H1 (cell line): ENCODE measurements at regions of chr11 and their contacts with region 1.

Region 1: DNA sequence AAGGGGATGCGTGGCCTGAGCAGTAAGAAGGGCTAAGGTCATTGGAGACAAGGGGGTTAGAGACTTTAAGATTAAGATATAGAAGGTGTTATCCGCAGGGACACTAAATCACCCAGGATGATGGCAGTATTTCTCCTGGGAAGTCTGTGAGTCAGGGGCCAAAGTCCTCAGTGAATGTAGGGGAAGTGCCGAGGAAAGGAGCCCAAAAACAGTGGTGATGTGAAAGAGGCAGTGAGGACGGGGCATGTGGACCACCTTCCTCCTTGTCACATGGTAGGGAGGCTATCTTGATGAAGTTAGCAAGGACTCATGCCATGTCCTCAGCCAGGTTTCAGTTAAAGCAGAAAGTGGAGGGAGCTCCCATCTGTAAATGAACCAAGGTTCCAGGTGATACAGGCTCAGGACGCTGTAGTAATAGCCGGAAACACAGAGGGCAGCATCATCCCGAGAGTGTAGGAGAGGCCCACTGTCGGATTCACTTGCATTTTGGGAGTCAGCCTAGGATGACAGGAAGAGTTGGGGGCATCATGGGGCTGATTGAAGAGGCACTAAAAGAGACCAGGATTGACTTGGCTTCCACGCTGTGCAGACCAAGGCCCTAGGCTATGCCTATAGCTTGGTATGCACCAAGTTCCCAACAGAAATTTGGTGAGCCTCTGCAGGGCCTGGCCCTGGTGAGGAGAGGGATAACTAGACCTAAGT is 33.5 kb downstream of the WEE1 start:
- DNase-seq: peak in 1 of 2 experiments; percentile 70
- H3K4me3 ChIP-seq: no peak overlapping the region
- H3K27ac ChIP-seq: no peak overlapping the region
- H3K4me1 ChIP-seq: peaks cover 0 to 3% (median 3%) of the 10 kb centered on the region in 4 experiments
- H3K27me3 ChIP-seq: no peaks in the 10 kb centered on the region
- CTCF ChIP-seq: peak; percentile 54 to 82 (median 71)
- EP300 ChIP-seq: no peak
- POLR2A ChIP-seq: no peak
- RAD21 ChIP-seq: peak; percentile 78 to 86

Region 2: GRCh38 chr11:9347100-9347499 is 259.9 kb before region 1 on chr11:
- CTCF ChIA-PET with region 1: no interaction called
- POLR2A ChIA-PET with region 1: no interaction called
- DNase-seq: no peak
- H3K4me3 ChIP-seq: no peak overlapping the region
- H3K27ac ChIP-seq: no peak overlapping the region
- H3K4me1 ChIP-seq: peaks cover 0 to 10% (median 4%) of the 10 kb centered on the region in 4 experiments; a peak in 2 of 7 replicates
- H3K27me3 ChIP-seq: no peaks in the 10 kb centered on the region
- CTCF ChIP-seq: no peak
- EP300 ChIP-seq: no peak
- POLR2A ChIP-seq: no peak
- RAD21 ChIP-seq: no peak

Region 3: GRCh38 chr11:9386901-9387300 is 220.1 kb before region 1 on chr11:
- CTCF ChIA-PET with region 1: no interaction called
- POLR2A ChIA-PET with region 1: no interaction called
- DNase-seq: no peak
- H3K4me3 ChIP-seq: peak overlapping the region in 1 of 4 experiments; percentile 82; a peak in 1 of 8 replicates
- H3K27ac ChIP-seq: no peak overlapping the region
- H3K4me1 ChIP-seq: no peaks in the 10 kb centered on the region; a peak in 1 of 7 replicates
- H3K27me3 ChIP-seq: no peaks in the 10 kb centered on the region
- CTCF ChIP-seq: no peak
- EP300 ChIP-seq: no peak
- POLR2A ChIP-seq: no peak
- RAD21 ChIP-seq: no peak

Region 4: DNA sequence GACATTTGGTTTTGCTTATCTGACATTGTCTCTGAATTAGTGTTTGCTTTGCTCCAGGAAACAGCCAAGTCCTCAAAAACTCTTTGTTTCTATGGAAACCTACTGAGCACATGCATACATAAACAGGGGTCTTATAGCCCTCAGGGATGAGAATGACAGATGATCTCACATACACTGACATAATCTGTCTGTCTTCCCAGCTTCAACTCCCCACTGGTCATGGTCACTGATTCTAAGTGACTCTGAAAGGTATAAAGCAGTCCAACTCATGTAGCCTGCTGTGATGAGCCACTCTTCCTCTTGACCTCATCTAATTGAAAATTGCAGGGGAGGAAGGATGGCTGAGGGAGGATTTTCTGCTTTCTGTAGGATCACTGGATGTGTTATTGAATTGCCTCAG is 133.6 kb before region 1 on chr11:
- CTCF ChIA-PET with region 1: no interaction called
- POLR2A ChIA-PET with region 1: no interaction called
- DNase-seq: no peak
- H3K4me3 ChIP-seq: no peak overlapping the region
- H3K27ac ChIP-seq: no peak overlapping the region
- H3K4me1 ChIP-seq: no peaks in the 10 kb centered on the region
- H3K27me3 ChIP-seq: no peaks in the 10 kb centered on the region
- CTCF ChIP-seq: no peak
- EP300 ChIP-seq: no peak
- POLR2A ChIP-seq: no peak
- RAD21 ChIP-seq: no peak

Region 5: DNA sequence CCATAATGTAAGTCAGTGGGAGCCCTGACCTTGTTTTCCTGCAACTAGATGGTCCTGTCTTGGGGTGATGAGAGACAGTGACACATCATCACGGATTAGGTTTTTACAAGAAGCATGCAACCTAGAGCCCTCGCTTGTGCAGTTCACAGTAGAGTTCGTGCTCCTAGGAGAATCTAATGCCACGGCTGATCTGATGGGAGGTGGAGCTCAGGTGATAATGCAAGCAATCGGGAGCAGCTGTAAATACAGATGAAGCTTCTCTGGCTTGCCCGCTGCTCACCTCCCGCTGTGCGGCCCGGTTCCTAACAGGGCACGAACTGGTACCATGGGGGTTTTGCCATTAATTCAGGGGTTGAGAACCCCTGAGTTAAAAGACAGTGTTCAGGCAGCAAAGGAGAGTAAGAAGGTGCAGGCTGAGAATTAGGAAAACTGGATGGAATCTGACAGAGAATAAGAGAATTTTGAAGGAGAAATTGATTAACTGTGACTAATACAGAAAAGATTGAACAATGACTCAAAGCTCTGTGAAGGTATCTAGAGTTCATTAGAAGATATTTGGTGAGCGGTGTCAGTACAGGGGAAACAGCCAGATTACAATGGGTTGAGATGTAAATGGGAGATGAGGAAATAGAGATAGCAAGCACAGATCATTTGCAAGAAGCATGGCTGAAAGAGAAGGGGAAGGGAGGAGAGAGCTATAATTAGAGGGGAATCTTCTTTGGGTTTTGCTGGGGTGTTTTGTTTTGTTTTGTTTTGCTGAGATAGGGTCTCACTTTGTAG is 12.5 kb before region 1 on chr11:
- CTCF ChIA-PET with region 1: interaction called, 48 read pairs
- POLR2A ChIA-PET with region 1: interaction called, 17 read pairs
- DNase-seq: peak in 1 of 2 experiments; percentile 49
- H3K4me3 ChIP-seq: no peak overlapping the region
- H3K27ac ChIP-seq: no peak overlapping the region
- H3K4me1 ChIP-seq: no peaks in the 10 kb centered on the region; a peak in 4 of 7 replicates
- H3K27me3 ChIP-seq: peaks cover 0 to 1% (median 0%) of the 10 kb centered on the region in 4 experiments; a peak in 1 of 7 replicates
- CTCF ChIP-seq: no peak
- EP300 ChIP-seq: no peak
- POLR2A ChIP-seq: no peak
- RAD21 ChIP-seq: no peak